Activated CD8-positive, alpha-beta T cell treated with anti-CD3 and anti-CD28 coated beads, Interleukin-2, amount 10 ng/mL, durations not matched to agents 7 days and 5 days (primary cell): ENCODE measurements at regions of chr7 and their contacts with region 1.

Region 1: DNA sequence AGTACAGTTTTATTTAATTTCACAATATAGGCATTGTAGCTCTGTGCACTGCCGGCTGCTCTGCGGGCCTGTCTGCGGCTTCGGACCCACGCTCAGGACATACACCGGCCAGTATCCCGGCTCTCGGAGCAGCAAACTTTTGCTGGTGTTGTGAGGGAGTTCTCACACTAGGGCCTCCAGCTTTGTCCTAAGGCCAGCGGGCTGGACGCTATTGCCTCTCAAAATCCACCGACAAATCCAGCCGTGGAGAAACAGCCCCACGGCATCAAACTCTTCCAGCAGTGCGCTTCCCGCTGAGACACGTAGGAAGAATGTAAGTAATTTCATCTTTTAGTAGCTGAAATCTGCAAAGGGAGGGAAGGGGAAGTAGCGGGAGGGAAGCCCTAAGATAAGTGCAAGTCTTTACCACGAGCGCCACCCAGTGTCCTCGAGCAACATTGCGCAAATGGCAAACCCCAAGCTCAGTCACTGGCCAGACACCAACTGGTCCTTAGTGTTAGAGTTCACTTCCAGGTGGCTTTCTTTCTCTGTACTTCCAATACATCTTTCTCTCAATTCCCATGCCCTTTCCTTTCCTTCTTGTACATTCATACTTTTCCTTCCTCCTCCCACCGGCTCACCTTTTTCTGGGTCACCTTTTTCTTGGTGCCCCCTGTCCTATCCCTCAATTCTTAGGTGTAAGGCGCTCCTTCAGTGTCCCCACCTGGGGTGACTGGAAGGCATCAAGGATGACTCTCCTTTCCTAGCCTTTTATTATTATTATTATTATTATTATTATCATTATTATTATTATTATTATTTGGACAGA is 3.0 kb upstream of the DLX5 start:
- DNase-seq: peak; percentile 77
- ATAC-seq: peak; percentile 87
- H3K4me3 Mint-ChIP-seq: peak overlapping the region; percentile 62
- H3K27ac Mint-ChIP-seq: no peak overlapping the region
- H3K4me1 Mint-ChIP-seq: peaks cover 34% of the 10 kb centered on the region
- H3K27me3 Mint-ChIP-seq: peaks cover 63% of the 10 kb centered on the region

Region 2: DNA sequence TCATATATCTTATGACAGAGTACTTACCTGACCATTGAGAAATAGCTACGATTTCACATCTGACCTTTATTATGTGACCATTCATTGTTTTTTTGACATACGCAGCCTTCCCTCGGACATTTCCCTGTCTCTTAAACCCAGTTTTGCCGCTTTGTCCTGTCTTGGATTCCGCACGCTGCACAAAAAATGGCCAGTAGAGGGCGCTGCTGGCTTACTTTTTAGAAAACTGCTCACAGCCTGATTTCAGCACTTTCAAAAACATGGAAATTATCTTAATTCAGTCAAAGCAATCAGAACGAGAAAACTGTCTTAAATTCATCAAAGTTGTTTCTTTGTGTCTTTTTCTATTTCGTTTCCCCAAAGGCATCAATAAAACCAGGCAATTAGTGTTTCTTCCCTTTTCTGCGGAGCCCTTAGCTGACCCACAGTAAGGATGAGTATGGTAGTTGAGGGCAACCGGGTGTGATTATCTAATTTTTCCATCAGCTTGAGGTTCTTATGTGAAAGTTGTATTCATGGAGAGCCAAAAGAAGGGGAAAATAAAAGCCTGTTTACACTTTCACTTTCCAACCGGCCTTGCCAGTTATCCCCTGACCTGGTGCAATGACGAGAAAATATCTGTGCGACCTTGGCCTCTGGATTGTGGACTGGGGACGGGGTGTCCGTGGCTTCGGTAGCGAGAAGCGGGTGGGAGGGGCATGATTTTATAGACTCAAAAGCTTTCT is 1110.9 kb before region 1 on chr7:
- CTCF ChIA-PET with region 1: interaction called, 34 read pairs
- POLR2A ChIA-PET with region 1: no interaction called
- DNase-seq: peak; percentile 79
- ATAC-seq: peak; percentile 68
- H3K4me3 Mint-ChIP-seq: no peak overlapping the region
- H3K27ac Mint-ChIP-seq: no peak overlapping the region
- H3K4me1 Mint-ChIP-seq: no peaks in the 10 kb centered on the region
- H3K27me3 Mint-ChIP-seq: peaks cover 13% of the 10 kb centered on the region

Region 3: DNA sequence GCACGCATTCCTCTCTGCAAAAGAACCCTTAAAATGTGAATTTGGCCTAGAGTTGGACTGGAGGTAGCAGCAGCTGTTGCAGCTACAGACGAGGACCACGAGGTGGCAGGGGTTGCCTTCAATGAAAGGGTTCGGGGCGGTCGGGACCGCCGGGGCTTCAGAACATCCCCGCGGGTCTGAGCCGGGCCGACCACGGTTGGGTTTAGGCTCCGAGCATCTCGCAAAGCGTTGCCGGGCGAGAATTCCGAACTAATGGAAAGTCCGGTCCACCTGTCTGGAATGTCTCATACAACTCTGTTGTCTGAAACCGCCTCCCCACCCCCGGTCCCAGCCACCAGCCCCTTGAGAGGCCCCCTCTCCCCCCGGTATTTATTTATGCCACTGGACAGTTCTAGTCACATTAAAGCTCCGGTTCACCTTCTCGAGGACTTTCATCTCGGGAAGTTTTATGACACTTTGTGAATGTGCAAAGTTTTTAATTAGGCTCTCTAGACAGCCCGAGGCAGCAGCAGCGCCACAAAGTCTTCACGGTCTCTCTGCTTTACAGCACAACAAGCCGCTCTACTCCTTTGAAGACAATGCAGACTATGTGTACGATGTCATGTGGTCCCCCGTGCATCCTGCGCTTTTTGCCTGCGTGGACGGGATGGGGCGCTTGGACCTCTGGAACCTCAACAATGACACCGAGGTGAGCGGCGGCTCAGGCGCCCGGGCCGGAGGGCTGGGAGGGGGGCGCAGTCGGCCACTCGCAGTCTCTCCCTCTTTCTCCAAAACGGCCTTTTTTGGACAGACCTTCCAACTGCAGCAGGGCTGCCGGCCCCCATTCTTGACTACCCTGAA is 951.9 kb before region 1 on chr7:
- CTCF ChIA-PET with region 1: interaction called, 17 read pairs
- POLR2A ChIA-PET with region 1: no interaction called
- DNase-seq: peak; percentile 58
- ATAC-seq: peak; percentile 93
- H3K4me3 Mint-ChIP-seq: peak overlapping the region; percentile 72
- H3K27ac Mint-ChIP-seq: no peak overlapping the region
- H3K4me1 Mint-ChIP-seq: peaks cover 5% of the 10 kb centered on the region
- H3K27me3 Mint-ChIP-seq: peaks cover 36% of the 10 kb centered on the region

Region 4: GRCh38 chr7:96414931-96415292 is 612.7 kb before region 1 on chr7:
- CTCF ChIA-PET with region 1: interaction called, 14 read pairs
- POLR2A ChIA-PET with region 1: no interaction called
- DNase-seq: peak; percentile 65
- ATAC-seq: peak; percentile 81
- H3K4me3 Mint-ChIP-seq: no peak overlapping the region
- H3K27ac Mint-ChIP-seq: no peak overlapping the region
- H3K4me1 Mint-ChIP-seq: peaks cover 3% of the 10 kb centered on the region
- H3K27me3 Mint-ChIP-seq: peaks cover 18% of the 10 kb centered on the region

Region 5: DNA sequence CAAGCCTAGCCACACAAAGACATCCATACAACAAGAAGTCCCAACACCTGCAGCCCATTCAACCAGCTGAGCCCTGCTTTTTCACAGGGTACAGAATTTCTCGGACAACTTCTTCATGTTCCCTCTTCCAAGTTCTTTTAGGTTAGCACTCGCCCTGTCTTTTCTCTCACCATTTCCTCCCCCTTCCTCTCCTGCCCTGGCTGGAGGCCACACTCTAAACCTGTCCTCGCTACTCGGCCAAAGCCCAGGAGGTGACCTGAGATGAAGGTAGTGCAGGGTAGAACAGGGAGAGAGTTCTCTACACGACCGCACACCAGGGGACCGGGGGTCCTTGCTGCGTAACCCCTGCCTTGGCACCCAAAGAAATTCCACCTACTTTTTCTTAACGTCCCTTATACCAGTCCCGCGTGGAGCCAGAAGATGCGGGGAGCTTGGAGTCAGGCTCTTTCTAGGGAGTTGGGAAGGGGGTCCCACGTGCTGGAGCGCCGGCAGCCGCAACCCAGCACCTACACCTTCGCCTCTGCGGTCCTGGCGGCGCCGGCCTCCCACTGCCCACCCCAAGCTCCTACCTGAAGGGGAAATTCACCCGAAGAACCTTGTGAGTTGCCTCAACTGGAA is 38.3 kb before region 1 on chr7:
- CTCF ChIA-PET with region 1: interaction called, 10 read pairs
- POLR2A ChIA-PET with region 1: no interaction called
- DNase-seq: no peak
- ATAC-seq: no peak
- H3K4me3 Mint-ChIP-seq: no peak overlapping the region
- H3K27ac Mint-ChIP-seq: no peak overlapping the region
- H3K4me1 Mint-ChIP-seq: no peaks in the 10 kb centered on the region
- H3K27me3 Mint-ChIP-seq: peaks cover 77% of the 10 kb centered on the region

Region 6: DNA sequence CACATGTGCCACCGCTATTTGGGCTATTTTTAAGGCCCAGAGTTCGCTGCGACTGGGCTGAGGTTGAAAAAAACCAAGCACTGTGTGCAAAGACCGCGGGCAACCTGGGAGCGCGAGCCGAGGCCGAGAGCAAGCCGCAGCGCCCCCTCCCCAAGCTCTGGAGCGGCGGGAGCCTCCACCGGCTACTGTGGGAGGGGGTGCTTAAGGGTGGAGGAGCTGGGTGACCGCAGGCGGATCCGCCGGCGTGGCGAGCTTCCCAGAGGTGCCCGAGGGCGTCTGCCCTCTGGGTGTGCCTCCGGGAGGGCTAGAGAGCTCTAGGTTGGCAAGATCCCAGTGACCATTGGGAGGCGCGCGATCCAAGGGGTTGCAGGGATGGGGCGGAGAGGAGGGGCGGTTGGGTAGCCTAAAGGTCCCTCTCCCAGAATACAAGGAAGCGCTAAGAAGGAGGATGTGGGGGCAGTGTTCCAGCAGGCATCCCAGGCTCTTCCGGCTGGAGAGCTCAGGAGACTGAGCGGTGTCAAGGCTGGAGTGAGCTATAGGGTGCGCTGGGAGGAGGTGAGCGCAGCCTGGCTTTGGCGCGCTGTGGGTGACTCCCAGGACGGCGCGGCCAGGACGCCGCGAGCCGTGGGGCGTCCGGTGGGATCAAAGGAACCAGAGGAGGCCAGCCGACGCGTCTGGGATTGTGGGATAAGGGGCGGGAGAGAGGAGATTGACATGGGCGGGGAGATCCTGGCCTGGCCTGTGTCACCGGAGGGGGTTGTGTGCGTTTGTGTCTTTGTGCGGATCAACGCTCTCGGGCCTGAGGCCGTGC is 11.0 kb before region 1 on chr7:
- CTCF ChIA-PET with region 1: interaction called, 10 read pairs
- POLR2A ChIA-PET with region 1: no interaction called
- DNase-seq: no peak
- ATAC-seq: no peak
- H3K4me3 Mint-ChIP-seq: no peak overlapping the region
- H3K27ac Mint-ChIP-seq: no peak overlapping the region
- H3K4me1 Mint-ChIP-seq: peaks cover 10% of the 10 kb centered on the region
- H3K27me3 Mint-ChIP-seq: peaks cover 92% of the 10 kb centered on the region

Region 7: GRCh38 chr7:97078023-97078969 is 50.7 kb after region 1 on chr7:
- CTCF ChIA-PET with region 1: no interaction called
- POLR2A ChIA-PET with region 1: no interaction called
- DNase-seq: no peak
- ATAC-seq: no peak
- H3K4me3 Mint-ChIP-seq: no peak overlapping the region
- H3K27ac Mint-ChIP-seq: no peak overlapping the region
- H3K4me1 Mint-ChIP-seq: no peaks in the 10 kb centered on the region
- H3K27me3 Mint-ChIP-seq: peaks cover 9% of the 10 kb centered on the region